Caco-2 (cell line): ENCODE measurements at regions of chr6 and their contacts with region 1.

Region 1: DNA sequence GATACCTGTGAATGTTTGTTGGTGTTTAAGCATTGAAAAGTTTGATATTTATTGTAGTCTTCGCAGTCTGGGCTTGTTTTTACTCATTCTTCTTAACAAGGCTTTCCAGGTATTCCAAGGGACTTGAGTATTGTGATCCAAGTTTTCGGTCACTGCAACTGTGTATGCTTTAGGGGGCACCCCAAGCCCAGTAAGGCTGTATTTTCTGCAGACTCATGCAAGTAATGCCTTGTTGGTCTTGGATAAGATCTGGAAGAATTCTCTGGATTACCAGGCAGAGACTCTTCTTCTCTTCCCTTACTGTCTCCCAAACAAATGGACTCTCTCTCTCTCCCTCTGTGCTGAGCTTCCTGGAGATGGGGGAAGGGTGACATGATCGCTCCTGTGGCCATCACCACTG is 82.1 kb downstream of the RFPL4B start:
- DNase-seq: peak in 1 of 2 experiments; percentile 46
- H3K4me3 ChIP-seq: no peak overlapping the region
- H3K4me3 Mint-ChIP-seq: no peak overlapping the region
- H3K27ac Mint-ChIP-seq: peak overlapping the region; percentile 47
- H3K4me1 ChIP-seq: no peaks in the 10 kb centered on the region
- H3K4me1 Mint-ChIP-seq: no peaks in the 10 kb centered on the region
- H3K27me3 ChIP-seq: no peaks in the 10 kb centered on the region
- H3K27me3 Mint-ChIP-seq: no peaks in the 10 kb centered on the region
- CTCF ChIP-seq: peak; percentile 28 to 55

Region 2: DNA sequence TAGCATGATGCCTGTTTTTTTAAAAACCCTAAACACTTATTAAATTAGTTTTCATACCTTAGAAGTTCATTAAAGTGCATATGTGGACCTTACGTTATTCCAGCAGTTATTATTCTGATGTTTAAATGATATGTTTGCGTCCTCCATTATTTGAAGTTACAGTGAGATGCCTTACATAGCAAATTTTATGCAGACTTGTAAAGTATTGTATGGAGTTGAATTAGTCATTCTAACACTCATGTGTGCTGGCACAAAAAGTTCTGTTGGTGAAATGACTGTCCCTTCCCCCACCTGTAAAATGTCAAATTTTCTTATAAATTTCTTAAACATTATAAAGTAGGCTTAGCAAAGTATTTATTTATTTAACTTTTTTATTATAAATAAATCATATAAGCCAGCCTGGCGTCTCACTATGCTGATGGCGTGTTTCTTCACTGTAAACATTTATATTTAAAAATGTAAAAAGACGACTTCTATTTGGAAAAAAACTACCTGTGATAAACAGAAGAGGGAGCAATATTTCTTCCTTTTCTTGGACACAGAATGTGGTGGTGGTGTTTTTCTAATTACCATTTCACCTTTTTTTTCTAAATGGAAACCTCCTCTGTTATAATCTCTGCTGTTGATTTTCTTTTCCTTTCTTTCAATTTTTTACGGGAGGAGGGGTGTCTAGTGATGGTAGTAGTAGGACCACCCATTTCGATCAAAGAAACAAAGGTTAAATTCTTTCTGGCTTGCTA is 73.3 kb after region 1 on chr6:
- CTCF ChIA-PET with region 1: no interaction called
- POLR2A ChIA-PET with region 1: no interaction called
- intact Hi-C with region 1: loop called (anchors 2 kb)
- DNase-seq: no peak
- H3K4me3 ChIP-seq: no peak overlapping the region
- H3K4me3 Mint-ChIP-seq: no peak overlapping the region
- H3K27ac Mint-ChIP-seq: no peak overlapping the region
- H3K4me1 ChIP-seq: no peaks in the 10 kb centered on the region
- H3K4me1 Mint-ChIP-seq: no peaks in the 10 kb centered on the region
- H3K27me3 ChIP-seq: no peaks in the 10 kb centered on the region
- H3K27me3 Mint-ChIP-seq: no peaks in the 10 kb centered on the region
- CTCF ChIP-seq: peak; percentile 5 to 16

Region 3: DNA sequence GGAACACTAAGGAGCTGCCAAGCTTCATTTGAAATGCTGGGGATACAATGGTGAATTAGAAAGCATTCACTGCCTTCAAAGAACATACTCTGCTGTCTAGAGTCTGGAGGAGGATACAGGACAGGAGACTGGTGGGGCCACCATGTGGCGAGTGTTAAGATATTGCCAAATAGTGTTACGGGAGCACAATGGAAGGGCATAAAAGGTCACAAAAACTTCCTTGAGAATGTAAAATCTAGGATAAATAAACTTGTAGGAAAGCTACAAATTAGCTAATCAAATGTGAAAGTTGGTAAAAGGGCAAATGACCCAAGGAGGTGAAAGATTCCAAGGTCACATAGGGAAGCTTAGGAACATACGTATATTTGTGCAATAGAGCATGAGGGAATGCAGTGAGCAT is 189.6 kb after region 1 on chr6:
- CTCF ChIA-PET with region 1: no interaction called
- POLR2A ChIA-PET with region 1: no interaction called
- intact Hi-C with region 1: loop called (anchors 1 kb)
- DNase-seq: peak in 1 of 2 experiments; percentile 37
- H3K4me3 ChIP-seq: no peak overlapping the region
- H3K4me3 Mint-ChIP-seq: no peak overlapping the region
- H3K27ac Mint-ChIP-seq: no peak overlapping the region
- H3K4me1 ChIP-seq: no peaks in the 10 kb centered on the region
- H3K4me1 Mint-ChIP-seq: no peaks in the 10 kb centered on the region
- H3K27me3 ChIP-seq: no peaks in the 10 kb centered on the region
- H3K27me3 Mint-ChIP-seq: no peaks in the 10 kb centered on the region
- CTCF ChIP-seq: peak in 1 of 2 experiments; percentile 44